ENCODE measurements at regions of chr3 and their contacts with region 1.

Region 1: DNA sequence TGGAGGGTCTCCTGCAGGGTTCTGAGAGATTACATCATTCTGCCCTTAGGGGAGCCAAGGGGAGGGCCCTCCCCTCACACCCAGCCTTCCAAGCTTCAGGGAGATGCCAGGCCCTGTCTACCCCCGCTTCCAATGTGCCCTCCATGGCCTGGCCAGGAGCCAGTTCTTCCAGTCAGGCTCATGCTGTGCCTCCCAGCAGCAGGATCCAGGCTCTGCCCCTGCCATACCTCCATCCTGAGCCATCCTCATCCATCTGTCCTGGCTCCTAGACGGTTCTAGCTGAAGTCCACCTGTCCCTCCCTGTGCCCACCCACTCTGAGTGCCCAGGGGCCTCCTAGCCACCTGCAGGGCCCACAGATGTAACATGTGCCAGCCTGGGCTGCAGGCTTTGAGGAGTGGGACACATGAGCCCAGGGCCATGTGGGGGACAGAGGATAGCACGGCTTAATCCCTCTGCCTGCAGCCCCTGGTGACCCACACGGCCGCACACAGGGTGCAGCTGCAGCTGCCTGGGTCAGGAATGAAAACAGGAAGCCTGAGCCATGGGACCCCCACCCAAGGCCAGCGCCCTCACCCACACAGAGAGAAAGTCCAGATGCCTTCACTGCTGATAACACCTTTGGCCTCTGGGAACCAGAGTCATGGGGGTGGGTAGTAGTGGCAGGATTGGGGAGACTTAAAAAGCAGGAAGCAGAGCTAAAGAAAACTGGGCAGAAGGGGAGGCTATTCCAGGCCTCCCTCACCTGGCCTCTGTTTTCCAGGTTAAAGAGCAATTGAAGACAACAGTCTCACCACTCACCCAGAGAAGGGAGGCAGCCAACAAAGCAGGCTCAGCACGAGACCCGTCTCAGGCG is 11.8 kb downstream of the PLCD1 start:
- DNase-seq: no peak
- ATAC-seq: no peak
- H3K4me3 ChIP-seq: no peak overlapping the region
- H3K27ac ChIP-seq: no peak overlapping the region
- H3K4me1 ChIP-seq: no peaks in the 10 kb centered on the region
- CTCF ChIP-seq: no peak
- EP300 ChIP-seq: no peak
- POLR2A ChIP-seq: no peak
- RAD21 ChIP-seq: no peak

Region 2: DNA sequence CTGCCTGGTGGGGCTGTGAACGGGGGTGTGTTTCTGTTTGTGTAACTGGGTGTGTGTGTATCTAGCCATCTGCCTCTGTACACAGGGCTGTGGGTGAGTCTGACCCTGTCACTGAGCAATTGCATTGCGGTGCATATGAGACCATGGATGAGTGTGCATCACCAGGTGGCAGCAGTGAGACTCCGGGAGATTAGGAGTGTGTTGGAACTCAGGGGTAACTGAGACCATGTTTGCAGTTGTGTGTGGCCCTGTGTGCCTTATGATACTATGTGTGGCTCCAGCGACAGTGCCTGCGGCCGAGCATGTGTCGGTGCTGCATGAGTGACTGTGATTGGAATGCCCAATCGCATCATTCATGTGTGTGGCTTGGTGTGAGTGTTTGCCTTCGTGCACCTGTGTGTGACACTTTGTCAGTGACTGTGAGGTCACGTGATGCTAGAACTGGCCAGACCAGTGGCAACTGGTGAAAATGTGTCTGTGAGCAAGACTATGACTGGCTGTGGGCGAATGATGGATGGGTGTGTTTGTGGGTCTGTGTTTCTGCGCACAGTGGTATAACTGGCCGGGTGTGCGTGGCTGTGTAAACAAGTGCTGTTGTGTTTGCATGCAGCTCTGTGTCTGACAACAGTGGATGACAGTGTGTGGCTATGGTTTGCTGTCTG is 13.1 kb before region 1 on chr3:
- CTCF ChIA-PET with region 1: interaction called, 31 read pairs
- POLR2A ChIA-PET with region 1: no interaction called
- DNase-seq: peak; percentile 55 to 76
- ATAC-seq: peak; percentile 75 to 88
- H3K4me3 ChIP-seq: no peak overlapping the region
- H3K27ac ChIP-seq: no peak overlapping the region
- H3K4me1 ChIP-seq: peaks cover 4% of the 10 kb centered on the region; the same call in 1 of the 3 replicates
- CTCF ChIP-seq: peak; percentile 72
- EP300 ChIP-seq: no peak
- POLR2A ChIP-seq: no peak
- RAD21 ChIP-seq: peak; percentile 51 to 62